Activated naive CD4-positive, alpha-beta T cell treated with anti-CD3 and anti-CD28 coated beads for 36 hours (primary cell): ENCODE measurements at regions of chr3 and their contacts with region 1.

Region 1: GRCh38 chr3:41198950-41199865 is at the start of gene CTNNB1:
- DNase-seq: peak; percentile 87
- H3K4me3 Mint-ChIP-seq: peak within 1 kb of the TSS; percentile 90
- H3K27ac Mint-ChIP-seq: peak within 1 kb of the TSS; percentile 92
- H3K4me1 Mint-ChIP-seq: peaks cover 28% of the 10 kb centered on the region
- H3K27me3 Mint-ChIP-seq: peaks cover 3% of the 10 kb centered on the region
- total RNA-seq, gene CTNNB1: 106 to 115 TPM

Region 2: GRCh38 chr3:40309418-40309924 is 889.7 kb before region 1 on chr3 and contains the start of gene EIF1B:
- CTCF ChIA-PET with region 1: no interaction called
- intact Hi-C with region 1: loop called (anchors 5 kb)
- DNase-seq: peak; percentile 99
- H3K4me3 Mint-ChIP-seq: peak within 1 kb of the TSS; percentile 99
- H3K27ac Mint-ChIP-seq: peak within 1 kb of the TSS; percentile 98
- H3K4me1 Mint-ChIP-seq: peaks cover 24% of the 10 kb centered on the region
- H3K27me3 Mint-ChIP-seq: no peaks in the 10 kb centered on the region
- total RNA-seq, gene EIF1B: 47.0 to 49.2 TPM

Region 3: DNA sequence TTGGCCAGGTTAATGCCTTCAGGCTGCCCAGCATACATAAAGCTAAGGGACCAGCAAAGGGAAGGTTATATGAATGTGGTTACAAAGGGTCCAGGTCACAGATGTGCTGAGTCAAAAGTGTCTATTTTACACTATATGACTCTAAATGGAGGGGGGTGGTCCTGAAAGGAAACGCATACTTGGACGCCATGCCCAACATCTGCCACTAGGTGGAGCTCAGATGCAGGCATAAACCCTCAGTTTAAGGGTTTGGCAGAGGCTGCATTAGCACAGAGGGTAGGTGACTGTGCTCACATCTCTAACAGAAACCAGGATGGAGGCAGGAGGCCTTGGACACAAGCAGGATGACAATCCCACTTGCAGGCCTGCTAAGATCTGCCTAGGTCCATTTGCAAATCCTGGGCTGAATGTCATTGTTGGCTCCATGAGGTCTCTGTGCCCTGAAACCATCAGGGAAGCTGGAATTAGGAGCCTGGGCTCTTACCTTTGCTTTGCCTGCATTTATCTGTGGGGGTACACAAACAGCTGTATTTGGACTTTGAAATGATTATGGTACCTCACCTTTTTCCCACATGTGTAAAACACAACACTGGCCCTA is 618.6 kb before region 1 on chr3:
- CTCF ChIA-PET with region 1: no interaction called
- intact Hi-C with region 1: loop called (anchors 5 kb)
- DNase-seq: peak; percentile 79
- H3K4me3 Mint-ChIP-seq: no peak overlapping the region
- H3K27ac Mint-ChIP-seq: no peak overlapping the region
- H3K4me1 Mint-ChIP-seq: no peaks in the 10 kb centered on the region
- H3K27me3 Mint-ChIP-seq: peaks cover 2% of the 10 kb centered on the region

Region 4: GRCh38 chr3:40899286-40899712 is 299.9 kb before region 1 on chr3:
- CTCF ChIA-PET with region 1: no interaction called
- intact Hi-C with region 1: no loop called
- DNase-seq: no peak
- H3K4me3 Mint-ChIP-seq: no peak overlapping the region
- H3K27ac Mint-ChIP-seq: no peak overlapping the region
- H3K4me1 Mint-ChIP-seq: no peaks in the 10 kb centered on the region
- H3K27me3 Mint-ChIP-seq: peaks cover 2% of the 10 kb centered on the region

Region 5: GRCh38 chr3:41188268-41188667 is 10.9 kb before region 1 on chr3:
- CTCF ChIA-PET with region 1: interaction called, 5 read pairs
- intact Hi-C with region 1: loop called (anchors 1 kb)
- DNase-seq: peak; percentile 51
- H3K4me3 Mint-ChIP-seq: no peak overlapping the region
- H3K27ac Mint-ChIP-seq: no peak overlapping the region
- H3K4me1 Mint-ChIP-seq: peaks cover 29% of the 10 kb centered on the region
- H3K27me3 Mint-ChIP-seq: peaks cover 1% of the 10 kb centered on the region

Region 6: DNA sequence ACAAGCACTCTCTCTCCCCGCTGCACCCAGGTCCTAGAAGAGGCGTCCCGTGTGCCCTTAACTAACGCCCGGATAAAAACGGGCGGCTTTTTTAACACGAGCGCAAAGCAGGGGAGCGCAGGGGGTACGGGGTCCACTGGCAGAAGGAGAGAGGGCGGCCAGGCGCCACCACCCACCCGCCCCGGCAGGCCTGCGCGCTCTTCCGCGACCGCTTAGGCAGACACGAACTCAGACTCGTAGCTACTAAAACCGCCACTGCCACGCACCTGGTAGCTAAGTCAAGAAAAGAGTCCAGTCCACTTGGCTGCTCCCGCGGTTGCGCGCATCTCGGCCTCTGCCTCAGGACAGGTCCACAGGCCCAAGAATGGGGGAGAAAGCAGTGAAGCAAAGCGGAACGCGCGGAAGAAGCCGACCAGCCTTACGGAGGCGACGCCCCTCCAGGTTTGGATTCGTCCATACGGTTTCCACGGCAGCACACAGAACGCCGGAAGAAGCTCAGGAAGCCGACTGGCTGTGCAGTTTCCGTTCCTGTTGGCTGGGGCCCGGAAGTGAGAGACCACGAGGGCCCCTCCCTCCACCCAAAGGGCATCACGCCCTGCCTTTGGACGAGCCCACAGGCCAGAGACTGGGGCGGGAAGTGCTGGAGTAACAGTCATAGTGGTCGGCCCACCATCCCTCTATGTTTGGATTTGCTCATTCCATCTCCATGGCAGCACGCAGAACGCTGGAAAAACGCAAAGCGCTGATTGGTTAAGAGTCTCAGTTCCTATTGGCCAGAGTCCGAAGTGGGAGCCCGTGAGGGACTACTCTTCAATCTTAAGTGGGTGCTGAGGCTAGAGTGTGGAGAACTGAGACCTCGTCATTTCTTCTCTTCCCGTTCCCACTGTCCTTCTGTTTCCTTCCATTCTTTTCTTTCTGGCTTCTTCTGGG is 762.8 kb after region 1 on chr3 and contains the start of gene ULK4:
- CTCF ChIA-PET with region 1: no interaction called
- intact Hi-C with region 1: loop called (anchors 5 kb)
- DNase-seq: peak; percentile 97
- H3K4me3 Mint-ChIP-seq: peak within 1 kb of the TSS; percentile 99
- H3K27ac Mint-ChIP-seq: peak within 1 kb of the TSS; percentile 87
- H3K4me1 Mint-ChIP-seq: peaks cover 13% of the 10 kb centered on the region
- H3K27me3 Mint-ChIP-seq: no peaks in the 10 kb centered on the region
- total RNA-seq, gene ULK4: 8.5 to 9.1 TPM